ENCODE measurements at regions of chr19 and their contacts with region 1.

Region 1: GRCh38 chr19:9914315-9915207 is 21.8 kb downstream of the OLFM2 start:
- DNase-seq: peak; percentile 93
- ATAC-seq: peak; percentile 97
- H3K4me3 Mint-ChIP-seq: peak overlapping the region; percentile 53
- H3K27ac Mint-ChIP-seq: no peak overlapping the region
- H3K4me1 Mint-ChIP-seq: peaks cover 3% of the 10 kb centered on the region
- H3K27me3 Mint-ChIP-seq: peaks cover 27% of the 10 kb centered on the region

Region 2: DNA sequence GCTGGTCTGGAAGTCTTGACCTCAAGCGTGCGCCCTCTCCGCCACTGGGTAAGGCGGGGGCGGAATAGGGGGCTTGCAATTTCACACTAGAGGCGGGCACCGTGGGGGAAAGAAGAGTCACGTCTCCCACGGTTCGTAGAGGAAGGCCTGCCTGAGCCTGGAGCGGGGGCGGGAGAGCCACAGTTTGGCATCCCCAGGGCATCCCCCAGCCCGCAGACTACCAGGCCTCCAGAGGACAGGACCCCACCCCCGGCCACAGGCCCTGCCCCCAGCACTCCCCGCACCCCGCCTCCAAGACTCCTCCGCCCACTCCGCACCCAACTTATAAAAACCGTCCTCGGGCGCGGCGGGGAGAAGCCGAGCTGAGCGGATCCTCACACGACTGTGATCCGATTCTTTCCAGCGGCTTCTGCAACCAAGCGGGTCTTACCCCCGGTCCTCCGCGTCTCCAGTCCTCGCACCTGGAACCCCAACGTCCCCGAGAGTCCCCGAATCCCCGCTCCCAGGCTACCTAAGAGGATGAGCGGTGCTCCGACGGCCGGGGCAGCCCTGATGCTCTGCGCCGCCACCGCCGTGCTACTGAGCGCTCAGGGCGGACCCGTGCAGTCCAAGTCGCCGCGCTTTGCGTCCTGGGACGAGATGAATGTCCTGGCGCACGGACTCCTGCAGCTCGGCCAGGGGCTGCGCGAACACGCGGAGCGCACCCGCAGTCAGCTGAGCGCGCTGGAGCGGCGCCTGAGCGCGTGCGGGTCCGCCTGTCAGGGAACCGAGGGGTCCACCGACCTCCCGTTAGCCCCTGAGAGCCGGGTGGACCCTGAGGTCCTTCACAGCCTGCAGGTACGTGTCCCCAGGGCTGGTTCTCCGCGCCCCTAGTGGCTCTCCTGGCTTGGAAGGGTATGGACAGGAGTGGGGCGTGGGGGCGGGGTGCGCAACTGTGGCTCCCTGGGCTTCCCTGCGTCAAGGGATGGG is 1550.5 kb before region 1 on chr19 and contains the start of gene ANGPTL4:
- CTCF ChIA-PET with region 1: no interaction called
- POLR2A ChIA-PET with region 1: no interaction called
- intact Hi-C with region 1: loop called in 1 of 2 experiments (anchors 5 kb)
- DNase-seq: peak; percentile 91
- ATAC-seq: peak; percentile 80
- H3K4me3 Mint-ChIP-seq: peak within 1 kb of the TSS; percentile 75
- H3K27ac Mint-ChIP-seq: peak within 1 kb of the TSS; percentile 55
- H3K4me1 Mint-ChIP-seq: peaks cover 25% of the 10 kb centered on the region
- H3K27me3 Mint-ChIP-seq: peaks cover 48% of the 10 kb centered on the region
- total RNA-seq, gene ANGPTL4: 7.4 to 7.9 TPM

Region 3: GRCh38 chr19:9584073-9584833 is 330.3 kb before region 1 on chr19 and contains the start of gene ZNF121:
- CTCF ChIA-PET with region 1: no interaction called
- POLR2A ChIA-PET with region 1: no interaction called
- intact Hi-C with region 1: loop called in 1 of 2 experiments (anchors 2 kb)
- DNase-seq: peak; percentile 91
- ATAC-seq: peak; percentile 82
- H3K4me3 Mint-ChIP-seq: peak within 1 kb of the TSS; percentile 93
- H3K27ac Mint-ChIP-seq: peak within 1 kb of the TSS; percentile 94
- H3K4me1 Mint-ChIP-seq: peaks cover 29% of the 10 kb centered on the region
- H3K27me3 Mint-ChIP-seq: peaks cover 4% of the 10 kb centered on the region
- total RNA-seq, gene ZNF121: 71.4 to 75.3 TPM

Region 4: GRCh38 chr19:9834726-9835506 is 79.6 kb before region 1 on chr19 and contains the start of gene PIN1:
- CTCF ChIA-PET with region 1: no interaction called
- POLR2A ChIA-PET with region 1: no interaction called
- intact Hi-C with region 1: loop called in 1 of 2 experiments (anchors 1 kb)
- DNase-seq: peak; percentile 100
- ATAC-seq: peak; percentile 99
- H3K4me3 Mint-ChIP-seq: peak within 1 kb of the TSS; percentile 86
- H3K27ac Mint-ChIP-seq: peak within 1 kb of the TSS; percentile 88
- H3K4me1 Mint-ChIP-seq: peaks cover 20% of the 10 kb centered on the region
- H3K27me3 Mint-ChIP-seq: no peaks in the 10 kb centered on the region
- total RNA-seq, gene PIN1: 70.4 to 74.2 TPM

Region 5: GRCh38 chr19:9847087-9847671 is 67.4 kb before region 1 on chr19:
- CTCF ChIA-PET with region 1: interaction called, 3 read pairs
- POLR2A ChIA-PET with region 1: no interaction called
- intact Hi-C with region 1: loop called (anchors 1 to 5 kb)
- DNase-seq: peak; percentile 84
- ATAC-seq: peak; percentile 93
- H3K4me3 Mint-ChIP-seq: no peak overlapping the region
- H3K27ac Mint-ChIP-seq: peak overlapping the region; percentile 39
- H3K4me1 Mint-ChIP-seq: peaks cover 14% of the 10 kb centered on the region
- H3K27me3 Mint-ChIP-seq: no peaks in the 10 kb centered on the region

Region 6: GRCh38 chr19:9862938-9863337 is 51.6 kb before region 1 on chr19:
- CTCF ChIA-PET with region 1: no interaction called
- POLR2A ChIA-PET with region 1: no interaction called
- intact Hi-C with region 1: loop called in 1 of 2 experiments (anchors 1 kb)
- DNase-seq: peak; percentile 53
- ATAC-seq: peak; percentile 40
- H3K4me3 Mint-ChIP-seq: peak overlapping the region; percentile 70
- H3K27ac Mint-ChIP-seq: peak overlapping the region; percentile 97
- H3K4me1 Mint-ChIP-seq: peaks cover 77% of the 10 kb centered on the region
- H3K27me3 Mint-ChIP-seq: no peaks in the 10 kb centered on the region